CD4-positive, alpha-beta T cell (primary cell): ENCODE measurements at regions of chr20 and their contacts with region 1.

Region 1: DNA sequence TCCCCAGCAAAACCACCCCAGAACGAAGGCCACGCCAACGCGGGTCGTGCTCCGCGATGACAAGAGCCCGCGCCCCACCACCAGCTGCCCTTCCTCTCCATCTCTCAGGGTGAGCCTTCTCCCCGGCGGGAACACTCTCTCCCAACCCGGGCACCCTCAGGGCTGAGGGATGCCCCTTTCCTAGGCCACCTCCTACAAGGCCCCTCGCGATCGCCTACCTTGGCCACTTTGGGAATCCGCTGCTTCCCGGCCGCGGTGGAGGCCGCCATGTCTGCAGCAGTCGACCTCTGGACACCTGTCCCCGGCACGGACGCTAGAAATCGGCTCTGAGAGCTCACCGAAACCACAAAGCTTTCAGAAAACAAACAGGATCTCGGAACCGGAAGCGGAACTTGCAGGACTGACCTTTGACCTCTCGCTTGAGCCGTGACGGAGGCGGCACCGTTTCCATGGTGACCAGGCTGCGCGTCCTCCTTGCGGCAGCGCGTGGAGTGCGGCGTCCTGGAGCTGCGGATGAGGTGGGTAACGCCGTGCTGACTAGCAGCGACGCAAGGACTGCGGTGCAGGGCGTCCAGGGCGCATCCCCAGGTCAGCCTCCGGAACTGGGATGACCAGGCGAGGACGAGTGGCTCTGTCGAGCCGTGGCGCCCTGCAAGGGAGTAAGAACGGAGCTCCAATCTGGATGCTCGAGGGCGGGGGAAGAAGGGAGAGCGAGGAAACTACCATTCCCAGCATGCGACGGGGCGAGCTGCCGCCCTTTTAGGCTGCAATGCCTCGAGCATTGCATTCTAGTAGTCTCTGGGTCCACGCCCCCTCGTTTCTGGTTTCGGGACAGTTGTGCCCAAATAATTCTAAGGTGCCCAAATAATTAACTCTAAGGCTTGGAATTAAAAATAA is at the starts of genes CFAP61 and CRNKL1:
- DNase-seq: peak; percentile 94 to 100 (median 97)
- ATAC-seq: peak; percentile 93
- H3K4me3 ChIP-seq: peak within 1 kb of the TSS; percentile 91
- H3K4me3 Mint-ChIP-seq: peak within 1 kb of the TSS; percentile 98
- H3K27ac ChIP-seq: peak within 1 kb of the TSS; percentile 80 to 91
- H3K27ac Mint-ChIP-seq: peak within 1 kb of the TSS; percentile 89
- H3K4me1 ChIP-seq: peaks cover 7% of the 10 kb centered on the region
- H3K4me1 Mint-ChIP-seq: peaks cover 37% of the 10 kb centered on the region
- H3K27me3 ChIP-seq: no peaks in the 10 kb centered on the region
- H3K27me3 Mint-ChIP-seq: peaks cover 6% of the 10 kb centered on the region
- CTCF ChIP-seq: no peak
- total RNA-seq, gene CFAP61: not detected
- total RNA-seq, gene CRNKL1: 24.3 to 26.1 TPM

Region 2: DNA sequence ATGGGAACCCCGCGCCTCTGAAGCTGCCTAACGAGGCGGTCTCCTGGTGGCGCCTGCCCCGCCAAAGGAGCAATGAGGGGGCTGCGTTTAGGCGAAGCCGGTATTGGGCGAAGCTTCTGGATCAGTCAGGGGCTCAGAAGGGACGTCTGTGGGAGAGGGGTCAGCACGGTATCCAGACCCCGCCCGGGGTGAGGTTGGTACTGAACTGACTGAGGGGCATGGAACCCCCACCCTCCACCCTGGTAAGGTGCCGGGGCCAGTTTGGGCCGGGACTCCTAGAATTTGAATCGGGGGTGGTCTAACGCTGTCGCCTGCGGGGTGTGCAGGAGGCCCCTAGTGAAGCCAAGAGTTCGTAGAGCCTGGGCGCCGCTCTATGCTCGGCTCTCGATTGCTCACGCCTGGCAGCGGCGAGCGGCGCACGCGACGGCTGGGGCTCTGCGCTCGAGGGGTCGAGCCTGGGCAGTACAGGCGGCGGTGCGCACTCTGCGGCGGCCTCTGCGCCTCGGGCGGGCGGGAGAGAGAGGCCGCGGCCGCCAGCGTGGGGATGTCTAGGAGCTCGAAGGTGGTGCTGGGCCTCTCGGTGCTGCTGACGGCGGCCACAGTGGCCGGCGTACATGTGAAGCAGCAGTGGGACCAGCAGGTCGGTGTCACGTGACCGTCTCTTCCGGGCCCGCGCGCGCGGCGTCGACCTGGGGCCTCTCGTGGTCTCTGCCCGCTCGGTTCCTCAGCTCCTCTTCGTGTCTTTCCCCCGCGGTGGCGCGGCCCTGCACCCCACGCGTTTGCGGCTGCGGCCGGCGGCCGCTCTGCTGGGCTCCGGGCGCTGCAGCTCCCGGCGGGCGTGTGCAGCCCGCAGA is 1914.7 kb before region 1 on chr20 and contains the starts of genes KAT14 and PET117:
- CTCF ChIA-PET with region 1: no interaction called
- POLR2A ChIA-PET with region 1: interaction called, 4 read pairs
- intact Hi-C with region 1: loop called in 1 of 2 experiments (anchors 5 kb)
- DNase-seq: peak; percentile 83 to 96 (median 91)
- ATAC-seq: peak; percentile 92
- H3K4me3 ChIP-seq: peak within 1 kb of the TSS; percentile 81
- H3K4me3 Mint-ChIP-seq: peak within 1 kb of the TSS; percentile 96
- H3K27ac ChIP-seq: peak within 1 kb of the TSS; percentile 72 to 75
- H3K27ac Mint-ChIP-seq: peak within 1 kb of the TSS; percentile 95
- H3K4me1 ChIP-seq: peaks cover 32% of the 10 kb centered on the region
- H3K4me1 Mint-ChIP-seq: peaks cover 32% of the 10 kb centered on the region
- H3K27me3 ChIP-seq: no peaks in the 10 kb centered on the region
- H3K27me3 Mint-ChIP-seq: no peaks in the 10 kb centered on the region
- CTCF ChIP-seq: no peak
- total RNA-seq, gene KAT14: 8.5 to 9.4 TPM
- total RNA-seq, gene PET117: 13.6 to 14.6 TPM

Region 3: GRCh38 chr20:18793625-18794427 is 1258.5 kb before region 1 on chr20:
- CTCF ChIA-PET with region 1: no interaction called
- POLR2A ChIA-PET with region 1: interaction called, 8 read pairs
- intact Hi-C with region 1: loop called (anchors 5 to 10 kb)
- DNase-seq: peak; percentile 75 to 98 (median 82)
- ATAC-seq: peak; percentile 96
- H3K4me3 ChIP-seq: peak overlapping the region; percentile 75
- H3K4me3 Mint-ChIP-seq: peak overlapping the region; percentile 92
- H3K27ac ChIP-seq: peak overlapping the region; percentile 85 to 93
- H3K27ac Mint-ChIP-seq: peak overlapping the region; percentile 100
- H3K4me1 ChIP-seq: peaks cover 11% of the 10 kb centered on the region
- H3K4me1 Mint-ChIP-seq: peaks cover 28% of the 10 kb centered on the region
- H3K27me3 ChIP-seq: peaks cover 0 to 13% of the 10 kb centered on the region in 2 experiments
- H3K27me3 Mint-ChIP-seq: peaks cover 40% of the 10 kb centered on the region
- CTCF ChIP-seq: no peak

Region 4: GRCh38 chr20:19815553-19815991 is 236.8 kb before region 1 on chr20:
- CTCF ChIA-PET with region 1: no interaction called
- POLR2A ChIA-PET with region 1: no interaction called
- intact Hi-C with region 1: no loop called
- DNase-seq: peak in 2 of 14 experiments; percentile 47 to 63
- ATAC-seq: no peak
- H3K4me3 ChIP-seq: no peak overlapping the region
- H3K4me3 Mint-ChIP-seq: no peak overlapping the region
- H3K27ac ChIP-seq: no peak overlapping the region
- H3K27ac Mint-ChIP-seq: no peak overlapping the region
- H3K4me1 ChIP-seq: no peaks in the 10 kb centered on the region
- H3K4me1 Mint-ChIP-seq: no peaks in the 10 kb centered on the region
- H3K27me3 ChIP-seq: no peaks in the 10 kb centered on the region
- H3K27me3 Mint-ChIP-seq: peaks cover 23% of the 10 kb centered on the region
- CTCF ChIP-seq: no peak

Region 5: GRCh38 chr20:20017001-20017843 is 35.1 kb before region 1 on chr20 and contains the start of gene NAA20:
- CTCF ChIA-PET with region 1: interaction called, 24 read pairs
- POLR2A ChIA-PET with region 1: interaction called, 59 read pairs
- intact Hi-C with region 1: loop called (anchors 1 kb)
- DNase-seq: peak; percentile 82 to 95 (median 86)
- ATAC-seq: peak; percentile 98
- H3K4me3 ChIP-seq: peak within 1 kb of the TSS; percentile 76
- H3K4me3 Mint-ChIP-seq: peak within 1 kb of the TSS; percentile 95
- H3K27ac ChIP-seq: peak within 1 kb of the TSS; percentile 32 to 47
- H3K27ac Mint-ChIP-seq: peak within 1 kb of the TSS; percentile 88
- H3K4me1 ChIP-seq: peaks cover 38% of the 10 kb centered on the region
- H3K4me1 Mint-ChIP-seq: peaks cover 54% of the 10 kb centered on the region
- H3K27me3 ChIP-seq: no peaks in the 10 kb centered on the region
- H3K27me3 Mint-ChIP-seq: no peaks in the 10 kb centered on the region
- CTCF ChIP-seq: peak; percentile 75
- total RNA-seq, gene NAA20: 18.8 to 18.9 TPM

Region 6: DNA sequence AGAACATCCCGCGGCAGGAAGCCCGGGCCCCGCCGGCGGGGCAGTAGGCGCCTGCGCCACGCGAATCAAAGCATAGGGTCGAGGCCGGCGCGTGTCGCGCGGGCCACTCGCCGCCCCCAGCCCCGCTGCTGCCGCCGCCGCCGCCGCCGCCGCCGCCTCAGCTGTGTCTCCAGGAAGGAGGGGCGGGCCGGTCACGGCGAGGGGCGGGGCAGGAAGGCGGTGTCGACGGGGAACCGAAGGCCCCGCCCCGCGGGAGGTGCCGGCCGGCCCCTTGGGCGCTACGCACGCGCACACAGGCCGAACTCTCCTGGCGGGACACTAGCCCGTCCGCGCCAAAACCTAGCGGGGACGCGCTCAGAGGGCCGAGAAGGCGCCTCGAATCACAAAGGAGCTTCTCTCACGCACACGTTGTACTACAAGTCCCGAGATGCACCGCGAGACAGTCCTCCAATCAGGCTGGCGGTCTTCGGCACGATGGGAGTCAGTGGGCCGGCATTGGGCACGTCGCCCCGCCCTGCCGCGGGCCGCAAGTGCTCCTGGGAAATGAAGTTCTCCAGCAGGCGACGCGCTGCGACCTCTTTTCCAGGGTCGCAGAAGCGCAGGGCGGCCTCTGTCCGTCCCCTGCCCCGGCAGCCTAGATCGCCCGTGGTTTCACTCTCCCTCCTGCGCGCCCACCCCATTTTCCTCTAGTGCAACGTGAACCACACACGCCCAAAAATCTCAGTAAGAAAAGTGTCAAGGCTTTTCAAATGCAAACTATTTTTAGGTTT is 660.3 kb after region 1 on chr20 and contains the start of gene RALGAPA2:
- CTCF ChIA-PET with region 1: no interaction called
- POLR2A ChIA-PET with region 1: interaction called, 6 read pairs
- intact Hi-C with region 1: loop called (anchors 2 kb)
- DNase-seq: peak; percentile 89 to 97 (median 94)
- ATAC-seq: peak; percentile 93
- H3K4me3 ChIP-seq: peak within 1 kb of the TSS; percentile 82
- H3K4me3 Mint-ChIP-seq: peak within 1 kb of the TSS; percentile 98
- H3K27ac ChIP-seq: peak within 1 kb of the TSS; percentile 79 to 95
- H3K27ac Mint-ChIP-seq: peak within 1 kb of the TSS; percentile 92
- H3K4me1 ChIP-seq: peaks cover 15% of the 10 kb centered on the region
- H3K4me1 Mint-ChIP-seq: peaks cover 40% of the 10 kb centered on the region
- H3K27me3 ChIP-seq: no peaks in the 10 kb centered on the region
- H3K27me3 Mint-ChIP-seq: peaks cover 5% of the 10 kb centered on the region
- CTCF ChIP-seq: no peak
- total RNA-seq, gene RALGAPA2: 21.2 to 21.9 TPM